Activated CD4-positive, alpha-beta memory T cell treated with anti-CD3 and anti-CD28 coated beads for 36 hours (primary cell): ENCODE measurements at regions of chr5 and their contacts with region 1.

Region 1: DNA sequence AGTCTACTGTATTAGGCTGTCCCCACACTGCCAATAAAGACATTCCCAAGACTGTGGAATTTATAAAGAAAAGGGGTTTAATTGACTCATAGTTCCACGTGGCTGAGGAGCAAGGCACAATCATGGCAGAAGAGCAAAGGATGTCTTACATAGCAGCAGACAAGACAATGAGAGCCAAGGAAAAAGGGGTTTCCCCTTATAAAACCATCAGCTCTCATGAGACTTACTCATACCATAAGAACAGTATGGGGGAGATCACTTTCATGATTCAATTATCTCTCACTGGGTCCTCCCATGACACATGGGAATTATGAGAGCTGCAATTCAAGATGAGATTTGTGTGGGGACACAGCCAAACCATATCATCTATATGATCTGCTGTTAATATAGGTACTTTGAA is 14.8 kb upstream of the FSTL4 start:
- DNase-seq: no peak
- H3K4me3 Mint-ChIP-seq: no peak overlapping the region
- H3K27ac Mint-ChIP-seq: no peak overlapping the region
- H3K4me1 Mint-ChIP-seq: peaks cover 2% of the 10 kb centered on the region
- H3K27me3 Mint-ChIP-seq: peaks cover 46% of the 10 kb centered on the region

Region 2: DNA sequence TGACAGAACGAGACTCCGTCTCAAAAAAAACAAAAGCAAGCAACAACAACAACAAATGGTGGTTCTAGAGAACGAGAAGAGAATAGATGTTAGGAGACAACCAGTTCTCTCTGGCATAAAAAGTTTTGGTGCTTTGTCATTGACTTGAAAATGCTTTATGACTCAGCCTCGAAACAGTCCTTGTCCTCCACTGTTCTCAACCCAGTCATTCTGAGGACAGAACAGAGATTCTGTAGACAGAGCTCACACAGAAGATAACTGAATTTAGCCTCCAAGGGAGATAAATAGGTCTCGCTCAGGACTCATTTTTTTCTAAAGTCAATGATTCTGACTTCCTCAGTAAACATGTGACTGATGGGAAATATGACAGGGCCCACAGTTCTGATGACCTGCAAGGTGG is 61.2 kb after region 1 on chr5:
- CTCF ChIA-PET with region 1: no interaction called
- POLR2A ChIA-PET with region 1: no interaction called
- intact Hi-C with region 1: loop called (anchors 2 kb)
- DNase-seq: no peak
- H3K4me3 Mint-ChIP-seq: no peak overlapping the region
- H3K27ac Mint-ChIP-seq: peak overlapping the region; percentile 54
- H3K4me1 Mint-ChIP-seq: peaks cover 7% of the 10 kb centered on the region
- H3K27me3 Mint-ChIP-seq: peaks cover 33% of the 10 kb centered on the region